GM23248 (cell line): ENCODE measurements at regions of chr4 and their contacts with region 1.

Region 1: GRCh38 chr4:110310795-110311194 is 112.4 kb upstream of the ELOVL6 start:
- DNase-seq: no peak
- H3K4me3 ChIP-seq: no peak overlapping the region
- H3K27ac ChIP-seq: no peak overlapping the region
- H3K4me1 ChIP-seq: no peaks in the 10 kb centered on the region
- H3K27me3 ChIP-seq: peaks cover 9% of the 10 kb centered on the region; the same call in 1 of the 2 replicates

Region 2: DNA sequence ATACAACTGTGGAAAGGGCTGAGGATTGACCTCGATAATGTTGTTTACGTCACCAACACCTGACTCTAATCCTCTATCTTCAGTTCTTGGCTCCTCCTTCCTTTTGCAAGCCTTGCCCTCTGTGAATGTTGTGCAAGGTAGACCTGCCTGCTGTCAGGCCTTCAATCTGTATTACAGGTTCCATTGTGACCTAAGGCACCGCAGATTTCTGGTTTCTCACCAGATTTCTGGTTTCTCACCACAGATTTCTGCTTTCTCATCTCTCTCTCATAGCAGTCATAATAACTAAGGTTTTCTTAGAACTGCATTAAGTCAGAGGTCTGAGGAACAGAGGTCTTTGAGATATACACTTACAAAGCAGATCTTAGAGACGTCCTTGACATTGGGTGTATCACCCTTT is 1496.5 kb before region 1 on chr4:
- in situ Hi-C with region 1: no loop called
- DNase-seq: no peak
- H3K4me3 ChIP-seq: no peak overlapping the region
- H3K27ac ChIP-seq: no peak overlapping the region
- H3K4me1 ChIP-seq: no peaks in the 10 kb centered on the region
- H3K27me3 ChIP-seq: no peaks in the 10 kb centered on the region

Region 3: DNA sequence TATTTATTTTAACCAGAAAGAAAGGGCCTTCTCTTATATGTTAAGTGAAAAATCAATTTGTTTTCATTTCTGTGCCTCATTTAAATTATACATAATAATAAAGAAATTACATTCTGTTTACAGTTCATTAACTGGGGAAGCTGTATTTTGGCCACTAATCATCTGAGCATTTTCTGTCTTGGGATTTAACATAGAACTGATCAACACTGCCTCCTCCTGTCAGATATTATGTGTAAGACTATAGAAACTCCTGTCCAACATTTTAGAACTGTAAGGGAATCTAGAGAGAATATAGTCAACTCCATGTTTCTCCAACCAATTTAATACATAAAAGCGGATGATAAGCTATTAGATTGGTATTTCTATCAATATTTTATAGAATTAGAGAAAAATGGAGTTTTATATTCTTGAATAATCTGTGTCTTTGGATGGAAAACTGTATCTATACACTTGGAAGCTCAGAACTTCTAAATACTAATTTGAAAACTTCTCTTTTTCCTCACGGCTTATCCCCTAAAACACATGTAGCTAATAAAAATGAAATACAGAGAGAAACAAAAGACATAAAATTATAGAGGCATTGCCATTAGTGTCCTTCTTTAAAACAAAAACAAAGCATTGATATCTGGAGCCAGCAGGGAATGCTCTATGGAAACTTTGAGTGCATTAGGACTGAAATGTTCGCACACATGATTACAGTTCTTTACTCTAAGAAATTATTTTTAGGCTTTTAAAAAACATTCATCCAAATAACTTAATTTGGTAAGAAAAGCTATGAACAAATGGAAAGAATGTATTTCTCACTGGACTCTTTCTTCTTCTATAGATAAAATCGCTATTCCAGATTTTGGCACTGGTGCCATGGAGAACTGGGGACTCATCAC is 198.3 kb after region 1 on chr4:
- in situ Hi-C with region 1: loop called (anchors 10 kb)
- DNase-seq: peak; percentile 72
- H3K4me3 ChIP-seq: no peak overlapping the region
- H3K27ac ChIP-seq: no peak overlapping the region
- H3K4me1 ChIP-seq: 0 out of 2 replicates have a peak, but pooled peaks cover under 1% of the 10 kb centered on the region
- H3K27me3 ChIP-seq: no peaks in the 10 kb centered on the region